Adrenal gland (tissue), 19 donors: ENCODE measurements at regions of chr15 and their contacts with region 1.

Region 1: DNA sequence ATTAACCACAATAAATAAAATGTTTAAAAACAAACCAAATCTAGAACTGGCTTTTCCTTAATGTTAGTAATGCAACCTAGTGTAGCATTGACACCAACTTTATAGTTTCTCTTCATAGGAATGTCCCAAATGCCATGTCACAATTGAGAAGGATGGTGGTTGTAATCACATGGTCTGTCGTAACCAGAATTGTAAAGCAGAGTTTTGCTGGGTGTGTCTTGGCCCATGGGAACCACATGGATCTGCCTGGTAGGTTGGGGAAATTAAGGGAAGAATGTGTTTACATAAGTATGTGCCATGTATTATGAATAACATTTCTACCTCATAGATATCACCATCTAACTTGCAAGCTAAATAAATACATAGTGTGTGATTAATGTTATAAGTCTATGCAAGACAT is 84.4 kb upstream of the GOLGA6B start:
- DNase-seq: no peak
- H3K4me3 ChIP-seq: no peak overlapping the region
- H3K27ac ChIP-seq: no peak overlapping the region
- H3K4me1 ChIP-seq: peaks cover 0 to 10% of the 10 kb centered on the region in 2 donors
- H3K27me3 ChIP-seq: no peaks in the 10 kb centered on the region
- CTCF ChIP-seq: no peak
- POLR2A ChIP-seq: no peak

Region 2: DNA sequence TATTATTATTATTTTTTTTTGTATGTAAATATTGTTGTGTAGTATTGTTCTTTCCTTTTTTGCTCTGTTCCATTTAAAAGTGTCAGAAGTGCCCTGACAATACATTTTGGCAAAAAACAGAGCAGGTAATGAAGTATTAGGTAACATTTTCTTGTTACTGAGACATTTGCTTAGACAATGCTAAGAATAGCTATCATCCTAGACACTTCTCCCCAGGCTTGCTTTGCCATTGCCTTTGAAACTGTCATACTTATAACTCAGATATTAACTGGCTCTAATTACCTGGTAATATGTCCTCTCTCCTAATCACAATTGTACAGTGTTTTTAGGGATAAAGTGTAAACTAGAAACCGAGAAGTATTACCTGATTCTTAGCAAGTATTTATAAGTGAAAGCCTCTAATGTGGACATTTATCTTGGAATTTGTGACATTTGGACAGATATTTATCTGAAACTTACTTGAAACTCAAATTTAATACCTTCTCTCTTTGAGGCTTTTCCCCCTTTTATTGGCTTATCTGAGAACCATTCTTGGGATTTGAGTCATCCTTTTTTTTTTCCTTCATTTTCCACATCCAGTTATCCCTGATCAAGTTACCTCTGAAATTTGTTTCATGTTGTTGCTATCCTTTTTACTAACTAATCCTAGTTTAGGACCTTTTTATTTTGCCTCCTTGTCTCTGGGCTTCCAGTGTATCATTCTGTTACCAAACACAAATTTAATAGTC is 82.8 kb before region 1 on chr15:
- intact Hi-C with region 1: loop called in 1 of 2 experiments (anchors 10 kb)
- DNase-seq: no peak
- H3K4me3 ChIP-seq: no peak overlapping the region
- H3K27ac ChIP-seq: no peak overlapping the region
- H3K4me1 ChIP-seq: peaks cover 11 to 52% of the 10 kb centered on the region in 2 donors
- H3K27me3 ChIP-seq: no peaks in the 10 kb centered on the region
- CTCF ChIP-seq: no peak
- POLR2A ChIP-seq: no peak